Ovary (tissue), 10 donors: ENCODE measurements at regions of chr15 and their contacts with region 1.

Region 1: GRCh38 chr15:94670438-94671034 is 439.2 kb downstream of the MCTP2 start:
- DNase-seq: no peak
- H3K4me3 ChIP-seq: no peak overlapping the region
- H3K27ac ChIP-seq: peak overlapping the region in 1 of 2 donors; percentile 41
- H3K4me1 ChIP-seq: no peaks in the 10 kb centered on the region
- H3K27me3 ChIP-seq: no peaks in the 10 kb centered on the region
- CTCF ChIP-seq: peak; percentile 39 to 84 (median 73)
- EP300 ChIP-seq: no peak
- POLR2A ChIP-seq: no peak

Region 2: DNA sequence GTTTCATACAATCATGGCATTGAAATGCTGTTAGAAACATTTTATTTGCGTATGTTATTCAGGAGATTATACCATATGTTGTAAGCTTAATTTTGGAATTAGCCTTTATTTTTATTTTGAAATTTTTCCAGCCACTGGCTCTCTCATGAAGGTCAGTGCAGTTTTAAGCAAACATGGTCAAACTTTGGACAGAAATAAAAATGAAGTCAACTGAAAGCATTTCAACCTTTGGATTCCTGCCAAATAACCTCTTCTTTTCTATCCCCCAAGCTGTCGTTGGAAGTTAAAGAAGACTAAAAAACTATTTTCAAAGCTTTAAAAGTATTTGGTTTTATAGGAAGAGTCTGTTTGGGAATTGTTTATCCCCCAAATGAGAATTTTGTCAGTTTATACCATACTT is 407.5 kb after region 1 on chr15:
- intact Hi-C with region 1: loop called in 1 of 4 experiments (anchors 10 kb)
- DNase-seq: no peak
- H3K4me3 ChIP-seq: no peak overlapping the region
- H3K27ac ChIP-seq: peak overlapping the region in 1 of 2 donors; percentile 38
- H3K4me1 ChIP-seq: peaks cover 7% of the 10 kb centered on the region
- H3K27me3 ChIP-seq: no peaks in the 10 kb centered on the region
- CTCF ChIP-seq: no peak
- EP300 ChIP-seq: no peak
- POLR2A ChIP-seq: no peak